ENCODE measurements at regions of chr7 and their contacts with region 1.

Region 1: DNA sequence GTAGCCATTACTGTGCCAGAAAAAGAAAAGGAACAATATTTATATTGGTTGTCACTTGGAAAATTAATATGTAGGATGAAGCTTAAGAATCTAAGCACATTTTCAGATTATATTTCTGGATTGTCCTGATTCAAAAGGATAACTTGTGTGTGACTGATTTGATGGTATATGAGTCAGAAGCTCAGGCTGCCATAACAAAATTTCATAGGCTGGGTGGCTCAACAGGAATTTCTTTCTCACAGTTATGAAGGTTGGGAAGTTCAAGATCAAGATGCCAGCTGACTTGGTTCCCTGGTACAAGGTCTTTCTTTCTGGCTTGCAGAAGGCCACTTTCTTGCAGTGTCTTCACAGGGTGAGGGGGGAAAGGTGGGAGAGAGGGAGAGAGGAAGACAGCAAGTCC is 108.5 kb downstream of the ST7 start:
- DNase-seq: no peak

Region 2: GRCh38 chr7:116876664-116877442 is 184.9 kb before region 1 on chr7:
- in situ Hi-C with region 1: no loop called
- DNase-seq: no peak

Region 3: DNA sequence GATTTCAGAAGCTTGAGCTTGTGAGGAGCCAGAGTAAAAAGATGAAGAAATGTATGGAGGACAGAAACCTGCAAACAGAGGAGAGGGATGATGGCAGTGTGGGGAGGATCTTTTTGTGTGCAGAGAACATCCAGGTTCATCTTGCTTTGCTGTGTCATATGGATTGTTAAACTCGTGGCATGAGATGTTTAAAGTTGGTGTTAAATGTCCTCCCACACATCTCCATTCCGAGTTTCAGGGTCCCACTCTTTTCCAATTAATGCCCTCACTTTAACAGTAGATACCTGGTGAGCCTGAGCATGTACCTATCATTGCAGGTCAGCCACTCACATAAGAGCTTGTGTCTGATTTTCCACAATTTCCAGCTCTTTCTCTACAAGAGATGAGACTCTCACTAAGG is 39.3 kb after region 1 on chr7:
- in situ Hi-C with region 1: loop called (anchors 5 kb)
- DNase-seq: no peak

Region 4: GRCh38 chr7:117827862-117828261 is 766.1 kb after region 1 on chr7:
- in situ Hi-C with region 1: no loop called
- DNase-seq: peak; percentile 97